Naive thymus-derived CD4-positive, alpha-beta T cell (primary cell): ENCODE measurements at regions of chr3 and their contacts with region 1.

Region 1: DNA sequence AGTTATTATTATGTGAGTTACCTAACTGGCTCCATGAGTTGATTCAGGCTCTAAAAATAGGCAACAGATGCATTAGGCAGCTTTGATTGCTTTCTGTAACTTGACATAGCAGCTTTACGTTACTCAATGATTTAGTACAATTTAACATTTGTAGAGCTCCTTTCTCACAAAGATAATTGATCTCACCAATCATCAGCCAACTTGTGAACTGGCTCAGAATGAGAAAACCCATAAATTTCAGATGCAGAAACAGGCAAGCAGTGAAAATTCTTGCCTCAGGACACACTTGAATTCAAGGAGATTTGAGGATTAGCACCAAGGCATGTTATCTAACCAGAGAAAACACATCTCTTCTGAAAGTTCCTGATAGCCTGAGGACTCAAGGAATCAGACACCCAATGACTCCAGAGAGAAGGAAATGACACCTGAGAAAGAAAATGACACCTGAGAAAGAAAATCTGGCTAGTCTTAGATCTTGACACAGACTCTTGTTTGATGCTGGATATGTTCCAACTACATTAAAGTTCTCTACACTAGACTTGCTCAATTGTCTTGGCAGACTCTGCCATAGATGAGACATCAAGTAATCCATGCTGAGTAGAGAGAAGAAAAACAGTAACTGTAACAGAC is 315.1 kb upstream of the CBLB start:
- DNase-seq: peak in 2 of 9 donors; percentile 6 to 19
- ATAC-seq: peak; percentile 47
- H3K4me3 ChIP-seq: no peak overlapping the region
- H3K4me3 Mint-ChIP-seq: peak overlapping the region in 5 of 10 donors; percentile 0 to 61 (median 9)
- H3K27ac ChIP-seq: no peak overlapping the region
- H3K27ac Mint-ChIP-seq: peak overlapping the region in 8 of 9 donors; percentile 1 to 70 (median 50)
- H3K4me1 ChIP-seq: peaks cover 5 to 15% of the 10 kb centered on the region in 2 donors
- H3K4me1 Mint-ChIP-seq: peaks cover 20 to 50% (median 27%) of the 10 kb centered on the region in 7 donors
- H3K27me3 ChIP-seq: no peaks in the 10 kb centered on the region
- H3K27me3 Mint-ChIP-seq: no peaks in the 10 kb centered on the region

Region 2: GRCh38 chr3:106231086-106231485 is 47.2 kb after region 1 on chr3:
- CTCF ChIA-PET with region 1: no interaction called
- POLR2A ChIA-PET with region 1: no interaction called
- intact Hi-C with region 1: loop called in 1 of 2 experiments (anchors 2 kb)
- DNase-seq: no peak
- ATAC-seq: no peak
- H3K4me3 ChIP-seq: no peak overlapping the region
- H3K4me3 Mint-ChIP-seq: peak overlapping the region in 9 of 10 donors; percentile 3 to 80 (median 64)
- H3K27ac ChIP-seq: no peak overlapping the region
- H3K27ac Mint-ChIP-seq: peak overlapping the region in 8 of 9 donors; percentile 2 to 90 (median 46)
- H3K4me1 ChIP-seq: peaks cover 4 to 8% of the 10 kb centered on the region in 2 donors
- H3K4me1 Mint-ChIP-seq: peaks cover 10 to 47% (median 37%) of the 10 kb centered on the region in 7 donors
- H3K27me3 ChIP-seq: no peaks in the 10 kb centered on the region
- H3K27me3 Mint-ChIP-seq: no peaks in the 10 kb centered on the region

Region 3: GRCh38 chr3:106850437-106850836 is 666.6 kb after region 1 on chr3:
- CTCF ChIA-PET with region 1: no interaction called
- POLR2A ChIA-PET with region 1: no interaction called
- intact Hi-C with region 1: no loop called
- DNase-seq: no peak
- ATAC-seq: no peak
- H3K4me3 ChIP-seq: no peak overlapping the region
- H3K4me3 Mint-ChIP-seq: no peak overlapping the region
- H3K27ac ChIP-seq: no peak overlapping the region
- H3K27ac Mint-ChIP-seq: no peak overlapping the region
- H3K4me1 ChIP-seq: no peaks in the 10 kb centered on the region
- H3K4me1 Mint-ChIP-seq: no peaks in the 10 kb centered on the region
- H3K27me3 ChIP-seq: no peaks in the 10 kb centered on the region
- H3K27me3 Mint-ChIP-seq: peaks cover 0 to 10% (median 4%) of the 10 kb centered on the region in 5 donors